ENCODE measurements at regions of chr19 and their contacts with region 1.

Region 1: DNA sequence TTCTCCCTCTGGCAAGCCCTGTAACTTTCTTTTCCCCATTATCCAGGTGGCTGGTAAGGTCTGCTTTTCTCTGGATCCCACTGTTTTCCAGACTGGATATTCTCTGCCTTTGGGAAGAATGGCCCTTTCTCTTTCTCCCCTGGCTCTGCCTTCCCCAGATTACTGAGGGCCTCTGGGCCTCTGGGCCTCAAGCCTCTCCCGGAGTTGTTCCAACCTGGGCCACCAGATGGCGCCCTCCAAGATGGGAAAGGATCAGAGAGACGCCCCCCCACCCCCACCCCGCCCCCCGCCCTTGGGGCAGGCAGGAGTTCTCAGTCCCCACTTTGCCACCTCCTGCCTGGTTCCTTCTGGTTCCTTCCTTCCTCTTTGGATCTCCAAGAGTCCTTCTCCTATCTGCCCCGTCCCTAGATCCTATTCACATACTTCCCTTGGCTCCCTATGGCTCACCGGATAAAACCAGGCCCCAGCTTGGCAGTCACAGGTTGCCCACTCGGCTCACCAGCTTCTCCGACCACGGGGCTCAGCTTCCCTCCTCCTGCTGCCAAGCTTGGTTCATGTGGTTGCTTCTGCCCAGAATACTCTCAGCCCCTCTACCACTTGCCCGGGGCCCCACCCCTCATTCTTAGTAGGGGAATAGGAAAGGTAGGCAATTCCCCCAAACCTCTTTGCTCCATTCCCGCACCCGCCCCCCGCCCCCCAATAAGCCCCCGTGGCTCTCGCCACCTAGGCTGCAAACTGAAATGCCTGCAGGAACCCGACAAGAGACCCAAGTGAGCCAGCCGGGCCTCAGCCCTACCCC is 13.1 kb downstream of the EPS8L1 start:
- DNase-seq: peak; percentile 13
- H3K4me3 ChIP-seq: no peak overlapping the region
- H3K27ac ChIP-seq: no peak overlapping the region
- H3K27me3 ChIP-seq: peaks cover 25% of the 10 kb centered on the region
- CTCF ChIP-seq: peak; percentile 60

Region 2: GRCh38 chr19:55098773-55099532 is 10.2 kb after region 1 on chr19:
- CTCF ChIA-PET with region 1: interaction called, 19 read pairs
- POLR2A ChIA-PET with region 1: no interaction called
- DNase-seq: no peak
- H3K4me3 ChIP-seq: no peak overlapping the region
- H3K27ac ChIP-seq: no peak overlapping the region
- H3K27me3 ChIP-seq: no peaks in the 10 kb centered on the region
- CTCF ChIP-seq: 0 out of 2 replicates have a peak, but pooled peaks have one; percentile 3

Region 3: GRCh38 chr19:55106591-55106990 is 17.8 kb after region 1 on chr19:
- CTCF ChIA-PET with region 1: interaction called, 19 read pairs
- POLR2A ChIA-PET with region 1: no interaction called
- DNase-seq: no peak
- H3K4me3 ChIP-seq: no peak overlapping the region
- H3K27ac ChIP-seq: no peak overlapping the region
- H3K27me3 ChIP-seq: no peaks in the 10 kb centered on the region
- CTCF ChIP-seq: no peak

Region 4: DNA sequence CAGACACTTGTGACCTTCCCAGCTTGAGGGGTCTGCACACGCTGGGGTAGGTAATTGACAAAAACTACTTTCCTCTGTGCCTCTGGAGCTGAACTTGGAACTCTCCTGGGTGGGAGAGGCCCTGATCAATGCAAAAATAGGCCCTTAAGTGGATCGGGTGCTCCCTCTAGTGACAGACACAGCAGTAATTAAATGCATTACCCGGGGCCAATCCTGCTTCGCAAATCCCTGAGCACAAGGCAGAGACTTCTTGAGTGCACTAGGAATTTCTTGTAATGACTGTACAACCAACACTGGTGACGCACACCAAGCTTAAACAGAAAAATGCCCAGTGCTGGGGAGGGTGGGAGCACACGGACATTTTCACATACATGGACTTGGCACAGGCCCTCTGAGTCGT is 329.4 kb after region 1 on chr19:
- CTCF ChIA-PET with region 1: interaction called, 15 read pairs
- POLR2A ChIA-PET with region 1: no interaction called
- DNase-seq: peak; percentile 73
- H3K4me3 ChIP-seq: no peak overlapping the region
- H3K27ac ChIP-seq: no peak overlapping the region
- H3K27me3 ChIP-seq: peaks cover 5% of the 10 kb centered on the region
- CTCF ChIP-seq: peak; percentile 82